T-cell (primary cell): ENCODE measurements at regions of chr2 and their contacts with region 1.

Region 1: GRCh38 chr2:161133366-161133765 is 26.9 kb upstream of the TANK start:
- DNase-seq: no peak
- ATAC-seq: no peak
- H3K4me3 ChIP-seq: no peak overlapping the region
- H3K4me3 Mint-ChIP-seq: no peak overlapping the region
- H3K27ac ChIP-seq: no peak overlapping the region
- H3K27ac Mint-ChIP-seq: no peak overlapping the region
- H3K4me1 ChIP-seq: peaks cover 6 to 20% of the 10 kb centered on the region in 2 experiments
- H3K4me1 Mint-ChIP-seq: peaks cover 23 to 36% (median 31%) of the 10 kb centered on the region in 3 donors
- H3K27me3 ChIP-seq: no peaks in the 10 kb centered on the region
- H3K27me3 Mint-ChIP-seq: no peaks in the 10 kb centered on the region

Region 2: DNA sequence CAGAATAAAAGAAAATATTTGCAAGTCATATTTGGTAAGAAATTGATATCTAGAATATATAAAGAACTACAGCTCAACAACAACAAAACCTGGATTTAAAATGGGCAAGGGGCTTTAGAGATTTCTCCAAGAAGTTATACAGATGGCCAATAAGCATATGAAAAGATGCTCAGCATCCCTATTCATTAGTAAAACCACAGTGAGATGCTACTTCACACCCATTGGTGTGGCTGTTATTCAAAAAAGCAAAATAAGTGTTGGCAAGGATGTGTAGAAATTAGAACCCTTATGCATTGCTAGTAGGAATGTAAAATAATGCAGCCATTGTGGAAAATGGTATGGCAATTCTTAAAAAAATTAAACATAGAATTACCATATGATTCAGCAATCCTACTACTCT is 56.7 kb after region 1 on chr2:
- CTCF ChIA-PET with region 1: no interaction called
- POLR2A ChIA-PET with region 1: interaction called in 1 of 2 experiments, 12 read pairs
- DNase-seq: no peak
- ATAC-seq: no peak
- H3K4me3 ChIP-seq: no peak overlapping the region
- H3K4me3 Mint-ChIP-seq: no peak overlapping the region
- H3K27ac ChIP-seq: no peak overlapping the region
- H3K27ac Mint-ChIP-seq: no peak overlapping the region
- H3K4me1 ChIP-seq: no peaks in the 10 kb centered on the region
- H3K4me1 Mint-ChIP-seq: peaks cover 49 to 78% (median 65%) of the 10 kb centered on the region in 3 donors
- H3K27me3 ChIP-seq: no peaks in the 10 kb centered on the region
- H3K27me3 Mint-ChIP-seq: no peaks in the 10 kb centered on the region